T-cell (primary cell): ENCODE measurements at regions of chr12 and their contacts with region 1.

Region 1: GRCh38 chr12:54032627-54033100 is at the start of gene HOXC5:
- DNase-seq: peak in 33 of 35 experiments; percentile 22 to 81 (median 53)
- ATAC-seq: peak in 1 of 4 experiments; percentile 41
- H3K4me3 ChIP-seq: peak within 1 kb of the TSS; percentile 24 to 36
- H3K4me3 Mint-ChIP-seq: peak within 1 kb of the TSS; percentile 29 to 68 (median 37)
- H3K27ac ChIP-seq: no peak within 1 kb of the TSS
- H3K27ac Mint-ChIP-seq: no peak within 1 kb of the TSS
- H3K4me1 ChIP-seq: peaks cover 0 to 50% of the 10 kb centered on the region in 2 experiments
- H3K4me1 Mint-ChIP-seq: peaks cover 29 to 38% (median 33%) of the 10 kb centered on the region in 3 donors
- H3K27me3 ChIP-seq: peaks cover 24 to 97% of the 10 kb centered on the region in 2 experiments
- H3K27me3 Mint-ChIP-seq: peaks cover 63 to 83% of the 10 kb centered on the region in 2 donors
- total RNA-seq, gene HOXC5: not detected

Region 2: GRCh38 chr12:53978477-53979356 is 53.9 kb before region 1 on chr12:
- CTCF ChIA-PET with region 1: no interaction called
- POLR2A ChIA-PET with region 1: no interaction called
- DNase-seq: no peak
- ATAC-seq: no peak
- H3K4me3 ChIP-seq: no peak overlapping the region
- H3K4me3 Mint-ChIP-seq: no peak overlapping the region
- H3K27ac ChIP-seq: no peak overlapping the region
- H3K27ac Mint-ChIP-seq: no peak overlapping the region
- H3K4me1 ChIP-seq: peaks cover 5 to 43% of the 10 kb centered on the region in 2 experiments
- H3K4me1 Mint-ChIP-seq: peaks cover 11 to 27% (median 19%) of the 10 kb centered on the region in 3 donors
- H3K27me3 ChIP-seq: peaks cover 19 to 97% of the 10 kb centered on the region in 2 experiments
- H3K27me3 Mint-ChIP-seq: peaks cover 79 to 88% of the 10 kb centered on the region in 2 donors

Region 3: DNA sequence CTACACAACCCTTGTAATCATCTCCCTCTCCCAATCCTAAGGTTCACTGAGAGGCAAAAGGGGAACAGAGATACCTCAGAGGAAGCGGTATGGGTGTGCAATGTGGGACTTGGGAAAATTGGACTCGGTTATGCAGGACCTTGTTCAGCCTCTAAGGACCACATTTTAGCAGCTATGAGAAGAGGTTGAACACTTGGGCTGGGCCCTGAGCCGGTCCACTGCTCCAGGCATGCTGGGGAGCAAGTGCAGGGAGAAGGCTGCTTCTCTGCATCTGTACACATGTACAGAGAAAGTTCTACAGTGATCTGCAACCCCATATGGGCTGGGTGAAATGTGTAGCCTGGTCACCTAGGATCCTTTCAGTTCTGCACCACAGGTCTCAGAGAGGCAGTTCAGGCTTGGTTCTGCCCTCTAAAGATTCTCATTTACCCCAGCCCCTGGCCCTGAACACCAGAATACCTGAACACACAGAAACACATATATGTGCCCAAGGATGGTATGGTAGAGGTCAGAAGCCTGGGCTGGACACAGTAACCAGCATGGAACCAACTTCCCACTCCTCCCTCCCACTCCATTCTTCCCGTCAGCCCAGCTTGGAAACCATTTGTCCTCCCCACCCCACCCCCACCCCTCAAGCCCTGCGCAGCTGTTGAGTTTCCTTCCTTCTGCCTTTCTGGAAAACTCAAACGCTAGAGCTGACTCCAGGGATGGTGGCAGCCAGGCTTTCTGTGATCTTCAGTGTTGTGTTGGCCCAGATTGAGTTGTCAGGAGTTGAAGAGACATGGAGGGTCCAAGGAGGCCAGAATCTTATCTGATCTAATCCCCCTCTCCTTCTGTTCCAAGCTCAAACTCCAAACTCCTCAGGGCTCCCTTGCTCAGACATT is 10.5 kb after region 1 on chr12:
- CTCF ChIA-PET with region 1: interaction called in 1 of 2 experiments, 3 read pairs
- POLR2A ChIA-PET with region 1: interaction called in 1 of 2 experiments, 11 read pairs
- DNase-seq: no peak
- ATAC-seq: no peak
- H3K4me3 ChIP-seq: no peak overlapping the region
- H3K4me3 Mint-ChIP-seq: no peak overlapping the region
- H3K27ac ChIP-seq: no peak overlapping the region
- H3K27ac Mint-ChIP-seq: no peak overlapping the region
- H3K4me1 ChIP-seq: peaks cover 0 to 20% of the 10 kb centered on the region in 2 experiments
- H3K4me1 Mint-ChIP-seq: peaks cover 10 to 17% (median 11%) of the 10 kb centered on the region in 3 donors
- H3K27me3 ChIP-seq: peaks cover 24 to 86% of the 10 kb centered on the region in 2 experiments
- H3K27me3 Mint-ChIP-seq: peaks cover 87 to 94% of the 10 kb centered on the region in 2 donors

Region 4: DNA sequence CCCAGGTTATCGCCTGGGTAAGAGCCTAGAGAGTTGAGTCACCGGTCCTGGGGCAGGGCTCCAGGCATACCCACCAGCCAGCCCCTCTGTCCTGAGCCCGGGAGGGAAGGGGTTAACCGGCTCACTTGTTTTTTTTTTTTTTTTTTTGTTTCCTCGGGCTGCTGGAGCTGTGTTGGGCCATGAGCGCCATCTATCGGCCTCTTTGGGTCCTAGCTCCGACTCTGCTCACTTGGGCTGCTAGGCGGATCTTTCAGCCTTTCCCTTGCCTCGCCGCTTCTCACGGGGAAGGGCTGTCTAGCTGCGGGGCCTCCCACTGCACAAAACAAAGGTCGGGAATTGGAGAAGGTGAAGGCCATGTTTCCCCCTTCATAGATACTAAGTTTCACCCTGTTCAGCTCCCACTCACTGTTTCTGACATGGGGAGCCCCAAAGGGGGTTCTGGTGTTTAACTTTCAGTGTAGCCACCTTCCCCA is 158.9 kb after region 1 on chr12:
- CTCF ChIA-PET with region 1: interaction called, 5 to 27 read pairs
- POLR2A ChIA-PET with region 1: interaction called, 7 to 8 read pairs
- DNase-seq: peak; percentile 49 to 94 (median 74)
- ATAC-seq: peak; percentile 53 to 65 (median 57)
- H3K4me3 ChIP-seq: no peak overlapping the region
- H3K4me3 Mint-ChIP-seq: no peak overlapping the region
- H3K27ac ChIP-seq: no peak overlapping the region
- H3K27ac Mint-ChIP-seq: peak overlapping the region in 1 of 2 donors; percentile 44
- H3K4me1 ChIP-seq: peaks cover 2 to 21% of the 10 kb centered on the region in 2 experiments
- H3K4me1 Mint-ChIP-seq: peaks cover 18 to 31% (median 24%) of the 10 kb centered on the region in 3 donors
- H3K27me3 ChIP-seq: peaks cover 3 to 56% of the 10 kb centered on the region in 2 experiments
- H3K27me3 Mint-ChIP-seq: peaks cover 37 to 54% of the 10 kb centered on the region in 2 donors

Region 5: GRCh38 chr12:54207484-54208294 is 175.0 kb after region 1 on chr12:
- CTCF ChIA-PET with region 1: interaction called, 5 to 10 read pairs
- POLR2A ChIA-PET with region 1: no interaction called
- DNase-seq: peak; percentile 22 to 84 (median 66)
- ATAC-seq: peak; percentile 87 to 90 (median 89)
- H3K4me3 ChIP-seq: no peak overlapping the region
- H3K4me3 Mint-ChIP-seq: no peak overlapping the region
- H3K27ac ChIP-seq: no peak overlapping the region
- H3K27ac Mint-ChIP-seq: peak overlapping the region in 1 of 2 donors; percentile 64
- H3K4me1 ChIP-seq: peaks cover 0 to 6% of the 10 kb centered on the region in 2 experiments
- H3K4me1 Mint-ChIP-seq: peaks cover 3 to 8% (median 3%) of the 10 kb centered on the region in 3 donors
- H3K27me3 ChIP-seq: peaks cover 2 to 68% of the 10 kb centered on the region in 2 experiments
- H3K27me3 Mint-ChIP-seq: peaks cover 27 to 50% of the 10 kb centered on the region in 2 donors